Stomach (tissue), 19 donors: ENCODE measurements at regions of chr2 and their contacts with region 1.

Region 1: DNA sequence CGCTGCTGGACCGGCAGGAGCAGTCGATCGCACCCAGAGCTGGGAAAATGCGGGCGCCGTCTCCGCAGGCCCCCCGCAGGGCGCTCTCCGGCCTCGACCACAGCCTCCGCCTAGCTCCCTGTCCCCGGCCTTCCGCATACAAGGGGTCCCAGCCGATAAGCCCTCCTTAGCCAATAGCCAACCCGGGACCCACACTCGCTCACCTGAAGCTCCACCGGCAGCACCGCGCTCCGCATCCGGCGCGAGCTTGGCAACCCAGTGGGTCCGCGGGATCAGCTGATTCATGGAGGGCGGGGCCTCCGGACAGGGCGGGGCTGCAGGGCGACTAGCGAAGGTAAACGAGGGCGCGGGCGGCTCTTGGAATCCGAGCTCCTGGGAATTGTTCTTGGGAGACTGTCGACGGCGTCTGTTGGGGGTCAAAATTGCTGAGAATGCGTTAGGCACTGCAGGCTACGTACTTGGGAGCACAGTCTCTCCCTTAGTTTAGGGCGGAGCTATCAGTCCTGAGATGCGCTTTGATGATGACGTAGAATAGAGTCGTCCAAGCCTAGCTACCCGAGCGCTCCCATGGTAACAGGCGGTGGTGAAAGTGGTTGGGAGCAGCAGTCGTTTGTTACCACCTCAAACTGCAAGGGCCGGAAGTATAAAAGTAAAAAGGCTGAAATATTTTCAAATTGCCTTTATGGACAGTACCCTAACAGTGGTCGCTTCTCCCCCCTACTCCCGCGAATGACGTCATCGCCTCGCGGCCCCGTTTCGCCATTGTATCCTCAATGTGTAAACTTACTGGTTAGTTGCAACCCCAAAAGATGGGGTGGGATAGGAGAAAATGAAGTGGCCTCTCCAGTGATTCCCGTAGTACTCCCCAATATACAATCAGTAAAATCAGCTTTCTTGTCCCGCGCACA is at the start of gene ALS2:
- DNase-seq: peak; percentile 98 to 99
- H3K4me3 ChIP-seq: peak within 1 kb of the TSS; percentile 86 to 92 (median 91)
- H3K27ac ChIP-seq: peak within 1 kb of the TSS; percentile 91 to 95 (median 94)
- H3K4me1 ChIP-seq: peaks cover 0 to 54% (median 34%) of the 10 kb centered on the region in 4 donors
- H3K27me3 ChIP-seq: no peaks in the 10 kb centered on the region
- CTCF ChIP-seq: no peak
- EP300 ChIP-seq: no peak
- POLR2A ChIP-seq: peak in 1 of 4 donors; percentile 64
- total RNA-seq, gene ALS2: 8.1 to 48.4 (median 29.0) TPM

Region 2: GRCh38 chr2:201647431-201647830 is 133.5 kb before region 1 on chr2:
- intact Hi-C with region 1: loop called (anchors 5 kb)
- DNase-seq: no peak
- H3K4me3 ChIP-seq: no peak overlapping the region
- H3K27ac ChIP-seq: no peak overlapping the region
- H3K4me1 ChIP-seq: peaks cover 8 to 17% (median 11%) of the 10 kb centered on the region in 4 donors
- H3K27me3 ChIP-seq: no peaks in the 10 kb centered on the region
- CTCF ChIP-seq: no peak
- EP300 ChIP-seq: no peak
- POLR2A ChIP-seq: no peak

Region 3: DNA sequence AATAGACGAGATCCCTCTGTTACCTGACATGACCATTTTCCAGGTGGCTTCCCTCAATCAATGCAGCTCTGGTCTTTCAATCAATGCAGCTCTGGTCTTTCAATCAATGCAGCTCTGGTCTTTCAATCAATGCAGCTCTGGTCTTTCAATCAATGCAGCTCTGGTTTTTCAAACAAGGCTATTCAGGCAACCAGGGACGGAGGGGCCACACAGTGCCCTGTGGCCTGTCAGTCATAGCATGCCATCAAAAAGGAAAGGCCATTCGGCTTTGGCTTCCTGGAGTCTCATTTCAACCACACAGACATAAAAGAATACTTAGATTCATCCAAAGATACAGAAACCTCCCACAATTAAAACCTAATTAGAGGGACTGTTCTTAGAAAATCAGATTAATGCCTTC is 95.8 kb before region 1 on chr2:
- intact Hi-C with region 1: no loop called
- DNase-seq: no peak
- H3K4me3 ChIP-seq: no peak overlapping the region
- H3K27ac ChIP-seq: no peak overlapping the region
- H3K4me1 ChIP-seq: no peaks in the 10 kb centered on the region
- H3K27me3 ChIP-seq: peaks cover 0 to 14% (median 0%) of the 10 kb centered on the region in 3 donors
- CTCF ChIP-seq: no peak
- EP300 ChIP-seq: no peak
- POLR2A ChIP-seq: no peak

Region 4: GRCh38 chr2:202033321-202034248 is 252.7 kb after region 1 on chr2 and contains the start of gene FZD7:
- intact Hi-C with region 1: no loop called
- DNase-seq: peak; percentile 91 to 97
- H3K4me3 ChIP-seq: peak within 1 kb of the TSS; percentile 76 to 84 (median 78)
- H3K27ac ChIP-seq: peak within 1 kb of the TSS; percentile 88 to 96 (median 89)
- H3K4me1 ChIP-seq: peaks cover 27 to 46% (median 35%) of the 10 kb centered on the region in 4 donors
- H3K27me3 ChIP-seq: peaks cover 3 to 50% (median 34%) of the 10 kb centered on the region in 3 donors
- CTCF ChIP-seq: peak in 1 of 7 experiments; percentile 4
- EP300 ChIP-seq: peak; percentile 12
- POLR2A ChIP-seq: no peak
- total RNA-seq, gene FZD7: 4.1 to 20.9 (median 7.8) TPM